SK-N-SH (cell line): ENCODE measurements at regions of chr6 and their contacts with region 1.

Region 1: GRCh38 chr6:152750694-152751093 is at the start of gene VIP:
- DNase-seq: no peak
- H3K4me3 ChIP-seq: peak within 1 kb of the TSS in 1 of 2 experiments; percentile 15; a peak in 1 of 4 replicates
- H3K27ac ChIP-seq: peak within 1 kb of the TSS; percentile 19 to 89; a peak in 3 of 4 replicates
- H3K4me1 ChIP-seq: peaks cover 0 to 12% of the 10 kb centered on the region in 2 experiments; a peak in 2 of 4 replicates
- H3K27me3 ChIP-seq: no peaks in the 10 kb centered on the region
- CTCF ChIP-seq: no peak
- EP300 ChIP-seq: no peak
- RAD21 ChIP-seq: no peak
- polyA plus RNA-seq, gene VIP: 2.5 and 4.8 TPM in 2 replicates

Region 2: GRCh38 chr6:152484806-152485205 is 265.9 kb before region 1 on chr6:
- CTCF ChIA-PET with region 1: interaction called, 11 read pairs
- POLR2A ChIA-PET with region 1: no interaction called
- DNase-seq: no peak
- H3K4me3 ChIP-seq: no peak overlapping the region
- H3K27ac ChIP-seq: no peak overlapping the region
- H3K4me1 ChIP-seq: no peaks in the 10 kb centered on the region
- H3K27me3 ChIP-seq: no peaks in the 10 kb centered on the region
- CTCF ChIP-seq: no peak
- EP300 ChIP-seq: no peak
- RAD21 ChIP-seq: no peak

Region 3: DNA sequence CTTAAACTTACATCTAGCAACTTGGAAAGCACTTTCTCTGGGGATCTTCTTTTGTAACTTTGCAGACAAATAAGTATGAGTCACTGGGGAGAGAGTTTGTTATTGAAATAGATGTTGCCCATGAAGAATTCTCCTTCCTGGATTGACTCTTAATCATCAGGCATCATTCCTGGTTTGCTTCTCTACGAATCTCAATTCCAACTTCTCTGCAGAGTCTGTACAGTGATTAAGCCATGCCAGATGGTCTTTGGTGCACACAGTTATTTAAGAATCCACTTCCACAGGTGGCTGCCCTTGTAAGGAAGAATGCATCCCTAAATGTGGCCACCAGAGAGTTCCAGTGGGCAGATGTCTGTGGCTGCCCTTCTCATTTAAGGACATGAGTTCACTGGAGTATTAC is 27.3 kb before region 1 on chr6:
- CTCF ChIA-PET with region 1: interaction called, 17 read pairs
- POLR2A ChIA-PET with region 1: no interaction called
- DNase-seq: no peak
- H3K4me3 ChIP-seq: no peak overlapping the region
- H3K27ac ChIP-seq: peak overlapping the region; percentile 70 to 92
- H3K4me1 ChIP-seq: peaks cover 2 to 9% of the 10 kb centered on the region in 2 experiments; a peak in 3 of 4 replicates
- H3K27me3 ChIP-seq: no peaks in the 10 kb centered on the region
- CTCF ChIP-seq: no peak
- EP300 ChIP-seq: peak in 1 of 2 experiments; percentile 43; a peak in 1 of 4 replicates
- RAD21 ChIP-seq: no peak

Region 4: GRCh38 chr6:152776833-152777232 is 26.1 kb after region 1 on chr6:
- CTCF ChIA-PET with region 1: no interaction called
- POLR2A ChIA-PET with region 1: no interaction called
- DNase-seq: no peak
- H3K4me3 ChIP-seq: no peak overlapping the region
- H3K27ac ChIP-seq: no peak overlapping the region
- H3K4me1 ChIP-seq: no peaks in the 10 kb centered on the region; a peak in 1 of 4 replicates
- H3K27me3 ChIP-seq: no peaks in the 10 kb centered on the region
- CTCF ChIP-seq: no peak
- EP300 ChIP-seq: no peak
- RAD21 ChIP-seq: no peak

Region 5: GRCh38 chr6:152815230-152815872 is 64.7 kb after region 1 on chr6:
- CTCF ChIA-PET with region 1: interaction called, 26 read pairs
- POLR2A ChIA-PET with region 1: no interaction called
- DNase-seq: peak; percentile 52
- H3K4me3 ChIP-seq: no peak overlapping the region
- H3K27ac ChIP-seq: peak overlapping the region in 1 of 2 experiments; percentile 98; a peak in 2 of 4 replicates
- H3K4me1 ChIP-seq: peaks cover 0 to 15% of the 10 kb centered on the region in 2 experiments; a peak in 2 of 4 replicates
- H3K27me3 ChIP-seq: no peaks in the 10 kb centered on the region
- CTCF ChIP-seq: no peak
- EP300 ChIP-seq: peak in 1 of 2 experiments; percentile 95; a peak in 2 of 4 replicates
- RAD21 ChIP-seq: peak; percentile 27; the same call in 1 of the 2 replicates

Region 6: DNA sequence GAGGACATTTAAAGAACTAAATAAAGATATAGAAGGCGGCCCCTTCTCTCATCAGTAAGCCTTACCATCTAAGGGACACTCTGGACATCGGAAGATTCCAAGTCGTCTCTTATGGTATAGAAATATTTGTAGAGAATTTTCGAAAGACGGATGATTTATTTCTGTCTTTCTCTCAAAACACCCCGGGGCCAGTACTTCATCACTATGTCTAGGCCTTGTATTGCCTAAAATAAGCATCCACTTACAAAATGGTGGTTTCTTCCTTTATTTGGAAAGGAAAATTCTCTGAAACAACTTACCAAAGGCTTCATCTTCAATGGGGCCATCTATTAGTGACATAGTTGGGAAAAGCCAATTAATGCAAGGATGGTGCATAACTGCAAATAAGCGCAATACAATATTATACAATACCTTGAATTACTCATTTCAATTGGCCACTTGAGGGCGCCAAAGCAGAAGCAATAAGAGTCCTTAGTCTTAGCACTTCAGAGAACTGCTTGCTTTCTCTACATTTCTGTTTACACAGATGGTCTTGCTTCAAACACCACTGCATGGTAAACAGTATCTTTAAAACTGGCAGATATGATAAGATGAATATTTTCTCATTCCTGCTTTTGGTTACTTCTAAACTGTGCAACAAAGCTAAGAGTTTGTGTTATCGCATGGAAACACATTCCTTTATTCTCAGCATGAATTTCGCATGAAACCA is 113.1 kb after region 1 on chr6:
- CTCF ChIA-PET with region 1: interaction called, 12 read pairs
- POLR2A ChIA-PET with region 1: no interaction called
- DNase-seq: peak; percentile 36
- H3K4me3 ChIP-seq: no peak overlapping the region
- H3K27ac ChIP-seq: no peak overlapping the region; a peak in 1 of 4 replicates
- H3K4me1 ChIP-seq: no peaks in the 10 kb centered on the region; a peak in 1 of 4 replicates
- H3K27me3 ChIP-seq: no peaks in the 10 kb centered on the region
- CTCF ChIP-seq: peak; percentile 72
- EP300 ChIP-seq: no peak
- RAD21 ChIP-seq: peak; percentile 89

Region 7: GRCh38 chr6:152922706-152923105 is 172.0 kb after region 1 on chr6:
- CTCF ChIA-PET with region 1: interaction called, 11 read pairs
- POLR2A ChIA-PET with region 1: no interaction called
- DNase-seq: no peak
- H3K4me3 ChIP-seq: no peak overlapping the region
- H3K27ac ChIP-seq: no peak overlapping the region
- H3K4me1 ChIP-seq: no peaks in the 10 kb centered on the region
- H3K27me3 ChIP-seq: no peaks in the 10 kb centered on the region
- CTCF ChIP-seq: no peak
- EP300 ChIP-seq: no peak
- RAD21 ChIP-seq: no peak

Region 8: DNA sequence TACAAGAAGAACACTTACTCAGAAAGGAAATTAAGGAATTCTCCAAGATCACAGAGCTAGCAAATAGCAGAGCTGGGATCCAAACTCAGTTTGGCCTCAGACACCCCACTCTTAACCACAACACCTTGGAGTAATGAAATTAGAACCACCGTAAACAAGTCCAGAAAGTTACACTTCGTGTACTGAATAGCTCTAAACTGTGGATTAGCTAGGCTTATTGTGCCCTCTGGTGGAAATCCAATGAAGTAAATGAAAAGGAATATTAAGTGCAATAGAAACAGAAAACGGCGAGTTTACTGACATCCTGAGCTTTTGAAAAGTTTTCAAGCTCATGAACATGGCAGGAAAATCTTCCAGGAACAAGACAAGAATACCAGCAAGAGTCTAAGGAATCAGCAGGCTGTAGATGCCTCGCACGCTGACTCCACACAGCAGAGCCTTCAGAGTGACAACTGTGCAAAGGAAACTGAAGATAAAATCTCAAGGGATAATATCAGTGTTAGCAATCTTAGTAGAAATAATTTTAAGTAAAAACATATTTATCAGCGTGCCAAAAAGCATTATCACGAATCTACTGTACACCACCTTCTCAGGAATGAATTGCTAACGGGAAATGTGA is 197.6 kb after region 1 on chr6:
- CTCF ChIA-PET with region 1: interaction called, 156 read pairs
- POLR2A ChIA-PET with region 1: no interaction called
- DNase-seq: peak; percentile 49
- H3K4me3 ChIP-seq: peak overlapping the region; percentile 24 to 28; a peak in 2 of 4 replicates
- H3K27ac ChIP-seq: no peak overlapping the region
- H3K4me1 ChIP-seq: peaks cover 2 to 13% of the 10 kb centered on the region in 2 experiments; a peak in 3 of 4 replicates
- H3K27me3 ChIP-seq: no peaks in the 10 kb centered on the region
- CTCF ChIP-seq: peak; percentile 71
- EP300 ChIP-seq: no peak
- RAD21 ChIP-seq: peak; percentile 96

Region 9: GRCh38 chr6:153002607-153003365 is 252.1 kb after region 1 on chr6 and contains the start of gene MTRF1L:
- CTCF ChIA-PET with region 1: no interaction called
- POLR2A ChIA-PET with region 1: no interaction called
- DNase-seq: peak; percentile 90
- H3K4me3 ChIP-seq: peak within 1 kb of the TSS; percentile 83 to 97
- H3K27ac ChIP-seq: peak within 1 kb of the TSS; percentile 95 to 96
- H3K4me1 ChIP-seq: peaks cover 0 to 13% of the 10 kb centered on the region in 2 experiments; a peak in 2 of 4 replicates
- H3K27me3 ChIP-seq: no peaks in the 10 kb centered on the region
- CTCF ChIP-seq: no peak
- EP300 ChIP-seq: 0 out of 4 replicates have a peak, but pooled peaks of 1 of the 2 experiments have one; percentile 27
- RAD21 ChIP-seq: no peak
- polyA plus RNA-seq, gene MTRF1L: 7.7 and 9.7 TPM in 2 replicates